ENCODE measurements at regions of chr6 and their contacts with region 1.

Region 1: DNA sequence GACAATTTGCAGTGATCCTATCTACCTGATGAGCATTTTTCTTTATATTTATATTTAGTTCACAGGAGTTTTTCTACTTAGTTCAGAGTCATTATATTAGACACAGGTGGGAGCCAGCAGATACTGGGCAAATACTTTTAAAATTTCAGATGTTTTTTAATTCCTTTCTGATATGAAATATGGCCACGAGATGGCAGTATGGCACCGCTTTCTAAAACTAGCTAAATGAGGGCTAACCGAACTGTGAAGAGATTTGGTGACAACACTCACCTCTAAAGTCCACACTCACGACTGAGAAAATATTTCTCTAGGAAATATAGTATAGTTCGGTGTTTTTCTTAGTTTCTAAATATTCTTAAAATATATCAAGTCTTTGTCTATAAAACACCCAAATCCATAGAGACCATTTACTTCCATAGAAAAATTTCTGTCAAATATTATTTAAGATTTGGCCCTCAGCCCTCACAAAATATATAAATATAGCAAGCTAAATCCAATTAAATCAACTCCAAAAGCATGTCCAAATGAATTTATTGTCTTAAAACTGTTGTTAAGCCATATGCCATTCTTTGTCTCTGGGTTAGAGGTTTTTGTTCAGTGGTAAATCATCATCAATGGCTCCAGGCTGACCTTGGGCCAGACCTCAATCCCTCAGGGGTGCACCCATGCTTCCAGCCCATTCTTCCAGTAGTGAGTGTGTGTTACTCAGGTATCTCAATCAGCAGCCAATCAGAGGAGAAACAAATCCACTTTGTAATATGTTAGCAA is 63.6 kb downstream of the HUS1B start:
- DNase-seq: peak; percentile 69
- H3K4me3 Mint-ChIP-seq: no peak overlapping the region
- H3K27ac Mint-ChIP-seq: no peak overlapping the region
- H3K4me1 Mint-ChIP-seq: no peaks in the 10 kb centered on the region
- H3K27me3 Mint-ChIP-seq: no peaks in the 10 kb centered on the region
- CTCF ChIP-seq: peak; percentile 48

Region 2: DNA sequence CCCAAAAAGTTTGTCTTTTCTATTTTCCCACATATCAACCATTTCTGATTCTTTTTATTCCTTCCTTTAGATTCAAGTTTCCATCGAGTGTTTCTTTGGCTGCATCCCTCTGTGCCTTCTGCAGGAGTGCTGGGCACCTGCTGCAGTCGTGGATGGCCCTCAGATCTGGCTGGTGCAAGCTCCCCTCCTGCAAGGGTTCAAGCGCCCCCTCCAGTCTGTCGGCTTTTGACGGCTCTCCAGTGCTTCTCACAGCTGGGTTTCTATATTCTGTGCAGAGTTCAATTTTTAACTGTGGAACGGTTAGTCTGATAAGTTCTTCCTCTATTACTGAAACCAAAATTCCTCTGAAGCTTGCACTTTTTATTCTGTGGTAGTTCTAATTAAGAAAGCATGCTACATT is 68.5 kb before region 1 on chr6:
- CTCF ChIA-PET with region 1: no interaction called
- POLR2A ChIA-PET with region 1: no interaction called
- intact Hi-C with region 1: no loop called
- DNase-seq: no peak
- H3K4me3 Mint-ChIP-seq: no peak overlapping the region
- H3K27ac Mint-ChIP-seq: no peak overlapping the region
- H3K4me1 Mint-ChIP-seq: no peaks in the 10 kb centered on the region
- H3K27me3 Mint-ChIP-seq: no peaks in the 10 kb centered on the region
- CTCF ChIP-seq: no peak

Region 3: GRCh38 chr6:582370-582769 is 11.0 kb before region 1 on chr6:
- CTCF ChIA-PET with region 1: interaction called, 26 read pairs
- POLR2A ChIA-PET with region 1: no interaction called
- intact Hi-C with region 1: no loop called
- DNase-seq: no peak
- H3K4me3 Mint-ChIP-seq: no peak overlapping the region
- H3K27ac Mint-ChIP-seq: peak overlapping the region; percentile 10
- H3K4me1 Mint-ChIP-seq: peaks cover 10% of the 10 kb centered on the region
- H3K27me3 Mint-ChIP-seq: no peaks in the 10 kb centered on the region
- CTCF ChIP-seq: no peak

Region 4: GRCh38 chr6:683742-684440 is 90.6 kb after region 1 on chr6:
- CTCF ChIA-PET with region 1: interaction called, 3 read pairs
- POLR2A ChIA-PET with region 1: interaction called, 3 read pairs
- intact Hi-C with region 1: loop called (anchors 5 kb)
- DNase-seq: no peak
- H3K4me3 Mint-ChIP-seq: no peak overlapping the region
- H3K27ac Mint-ChIP-seq: no peak overlapping the region
- H3K4me1 Mint-ChIP-seq: peaks cover 47% of the 10 kb centered on the region
- H3K27me3 Mint-ChIP-seq: no peaks in the 10 kb centered on the region
- CTCF ChIP-seq: no peak

Region 5: DNA sequence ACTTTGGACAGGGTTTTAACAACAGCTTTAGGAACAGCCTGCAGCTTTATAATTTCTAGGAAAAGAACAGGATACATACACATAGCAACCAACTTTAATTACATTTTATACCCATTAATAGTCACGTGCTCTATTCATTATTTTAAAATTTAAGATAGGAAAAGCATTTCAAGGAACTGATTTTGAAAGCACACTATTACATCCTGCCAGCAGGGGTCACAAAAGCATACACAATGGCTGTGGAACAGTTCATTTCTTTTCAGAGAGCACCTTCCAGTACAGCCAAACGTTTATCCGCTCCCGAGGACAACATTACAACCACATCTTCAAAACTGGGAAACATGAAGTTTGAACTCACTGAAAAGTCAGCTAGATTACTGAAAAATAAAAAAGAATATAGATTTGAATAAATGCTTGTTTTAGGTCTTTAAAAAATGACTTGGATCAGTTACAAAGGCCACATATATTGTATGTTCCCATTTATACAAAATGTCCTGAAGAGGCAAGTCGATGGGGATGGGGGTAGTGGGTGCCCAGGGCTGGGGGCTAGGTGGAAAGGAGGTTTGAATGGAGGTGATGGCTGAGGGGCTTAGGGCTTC is 204.3 kb after region 1 on chr6:
- CTCF ChIA-PET with region 1: interaction called, 3 read pairs
- POLR2A ChIA-PET with region 1: interaction called, 6 read pairs
- intact Hi-C with region 1: loop called (anchors 2 kb)
- DNase-seq: peak; percentile 68
- H3K4me3 Mint-ChIP-seq: no peak overlapping the region
- H3K27ac Mint-ChIP-seq: no peak overlapping the region
- H3K4me1 Mint-ChIP-seq: no peaks in the 10 kb centered on the region
- H3K27me3 Mint-ChIP-seq: peaks cover 40% of the 10 kb centered on the region
- CTCF ChIP-seq: peak; percentile 83

Region 6: DNA sequence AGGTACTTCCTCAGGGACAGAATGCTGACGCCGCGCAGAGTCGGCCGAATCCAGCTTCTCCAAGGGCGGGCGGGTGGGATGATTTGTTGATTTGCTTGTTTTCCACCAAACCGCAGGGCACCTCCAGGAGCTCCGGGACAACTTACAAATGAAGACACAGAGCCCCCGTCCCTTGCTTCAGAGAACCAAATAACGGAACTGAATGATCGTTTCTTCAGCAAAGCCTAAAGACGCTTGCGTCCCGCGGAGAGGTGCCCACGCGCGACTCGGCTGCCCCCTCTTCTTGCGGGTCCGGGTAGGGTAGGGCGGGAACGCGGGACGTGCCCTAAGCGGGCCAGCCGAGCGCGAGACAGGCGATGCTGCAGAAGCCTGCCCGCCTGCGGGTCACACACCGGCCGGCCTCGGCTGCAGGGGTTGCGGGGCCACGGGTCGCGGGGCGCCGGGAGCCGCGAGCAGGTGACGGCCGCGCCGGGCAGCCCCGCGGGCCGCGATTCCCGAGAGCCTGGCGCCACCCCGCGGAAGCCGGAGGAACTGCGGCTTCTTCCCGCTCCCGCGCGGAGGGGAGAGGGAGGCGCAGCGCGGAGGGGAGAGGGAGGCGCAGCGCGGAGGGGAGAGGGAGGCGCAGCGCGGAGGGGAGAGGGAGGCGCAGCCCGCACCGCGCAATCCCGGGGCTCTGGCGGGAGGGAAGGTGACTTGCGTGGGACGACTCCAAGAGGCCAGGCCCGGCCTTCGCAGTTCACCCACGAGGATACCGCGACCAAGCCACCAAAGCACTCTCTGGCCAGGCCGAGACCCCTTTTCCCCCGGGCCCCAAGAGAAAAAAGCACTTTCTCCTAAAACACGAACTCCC is 788.4 kb after region 1 on chr6:
- CTCF ChIA-PET with region 1: interaction called, 8 read pairs
- POLR2A ChIA-PET with region 1: no interaction called
- intact Hi-C with region 1: loop called (anchors 5 kb)
- DNase-seq: peak; percentile 50
- H3K4me3 Mint-ChIP-seq: peak overlapping the region; percentile 18
- H3K27ac Mint-ChIP-seq: no peak overlapping the region
- H3K4me1 Mint-ChIP-seq: peaks cover 8% of the 10 kb centered on the region
- H3K27me3 Mint-ChIP-seq: peaks cover 27% of the 10 kb centered on the region
- CTCF ChIP-seq: peak; percentile 92